ENCODE measurements at regions of chr2 and their contacts with region 1.

Region 1: DNA sequence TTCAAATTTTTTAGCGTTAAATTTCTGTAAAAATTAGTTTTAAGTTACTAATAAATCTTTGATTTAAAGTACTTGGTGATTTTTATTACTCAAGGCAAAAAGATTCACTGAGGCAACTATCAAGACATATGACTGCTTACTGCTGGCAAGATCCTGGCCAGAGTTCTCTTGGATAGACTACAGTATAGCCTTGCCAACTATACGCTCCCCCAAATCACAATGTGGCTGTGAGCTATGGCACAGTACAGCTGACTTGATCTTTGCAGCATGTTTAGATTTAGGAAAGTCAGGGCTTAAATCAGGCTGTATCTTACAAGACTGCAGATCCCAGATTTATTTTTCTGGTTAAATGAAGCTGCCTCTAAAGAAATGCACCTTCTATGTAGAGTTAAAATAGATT is 26.5 kb downstream of the MSTN start:
- DNase-seq: no peak
- H3K4me3 ChIP-seq: no peak overlapping the region
- H3K27ac ChIP-seq: no peak overlapping the region
- H3K4me1 ChIP-seq: no peaks in the 10 kb centered on the region
- H3K27me3 ChIP-seq: peaks cover 0 to 3% of the 10 kb centered on the region in 2 experiments
- CTCF ChIP-seq: no peak
- POLR2A ChIP-seq: no peak

Region 2: DNA sequence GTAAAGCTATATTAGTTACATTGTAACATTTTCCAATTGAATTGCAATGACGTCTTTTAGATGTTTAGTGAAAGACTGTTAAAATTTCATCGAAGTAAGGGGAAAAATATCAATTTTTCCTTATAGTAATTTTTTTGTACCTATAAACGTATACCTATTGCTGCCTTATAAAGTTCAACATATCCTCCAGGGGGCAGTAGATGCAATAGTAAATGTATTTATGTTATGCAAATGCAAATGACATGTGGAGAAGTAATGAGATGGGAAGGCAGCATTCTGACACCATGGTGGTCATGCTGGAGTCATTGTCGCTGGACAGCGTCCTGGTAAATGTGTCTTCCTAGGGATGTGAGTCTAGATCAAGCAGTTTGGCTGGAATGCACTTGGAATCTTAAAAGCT is 12.2 kb before region 1 on chr2:
- CTCF ChIA-PET with region 1: interaction called, 21 read pairs
- POLR2A ChIA-PET with region 1: no interaction called
- dilution Hi-C with region 1: no loop called
- intact Hi-C with region 1: no loop called
- DNase-seq: peak; percentile 64
- H3K4me3 ChIP-seq: no peak overlapping the region
- H3K27ac ChIP-seq: no peak overlapping the region
- H3K4me1 ChIP-seq: no peaks in the 10 kb centered on the region
- H3K27me3 ChIP-seq: peaks cover 5 to 16% of the 10 kb centered on the region in 2 experiments
- CTCF ChIP-seq: peak; percentile 42 to 54
- POLR2A ChIP-seq: no peak